ENCODE measurements at regions of chr1 and their contacts with region 1.

Region 1: GRCh38 chr1:210311726-210312493 is 16.8 kb upstream of the HHAT start:
- DNase-seq: no peak
- ATAC-seq: no peak
- H3K4me3 ChIP-seq: no peak overlapping the region
- H3K27ac ChIP-seq: no peak overlapping the region
- H3K4me1 ChIP-seq: 0 out of 2 replicates have a peak, but pooled peaks cover 2% of the 10 kb centered on the region
- H3K27me3 ChIP-seq: peaks cover 36% of the 10 kb centered on the region
- CTCF ChIP-seq: no peak
- POLR2A ChIP-seq: no peak
- RAD21 ChIP-seq: no peak

Region 2: DNA sequence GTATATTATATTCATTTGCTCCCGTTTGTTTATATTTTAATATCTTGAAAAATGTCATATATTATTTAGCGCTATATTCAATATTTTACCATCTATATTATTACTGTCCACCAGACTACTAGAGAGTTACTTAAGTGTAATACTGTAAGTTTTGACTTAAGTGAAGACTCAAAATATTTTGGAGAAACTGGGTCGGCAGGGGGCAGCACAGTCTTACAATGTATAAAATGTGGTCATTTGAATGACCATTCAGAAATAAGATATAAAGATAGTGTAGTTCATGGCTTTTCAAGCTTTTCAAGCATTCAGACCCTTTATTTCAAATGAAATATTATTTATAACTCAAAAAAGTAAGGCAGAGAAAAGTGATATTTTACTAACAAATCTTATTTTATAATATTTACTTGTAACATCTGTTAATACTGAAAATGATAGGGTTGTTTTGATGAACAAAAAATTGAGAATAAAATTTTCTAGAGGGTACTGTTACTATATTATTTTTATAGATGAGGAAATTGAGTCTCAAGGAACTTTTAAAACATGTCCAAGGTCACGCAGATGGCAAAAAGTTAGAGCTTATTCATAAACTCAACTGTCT is 168.3 kb before region 1 on chr1:
- CTCF ChIA-PET with region 1: interaction called, 7 read pairs
- POLR2A ChIA-PET with region 1: no interaction called
- dilution Hi-C with region 1: no loop called
- in situ Hi-C with region 1: loop called (anchors 5 kb)
- intact Hi-C with region 1: loop called (anchors 1 kb)
- DNase-seq: peak; percentile 68
- ATAC-seq: no peak
- H3K4me3 ChIP-seq: no peak overlapping the region
- H3K27ac ChIP-seq: no peak overlapping the region
- H3K4me1 ChIP-seq: no peaks in the 10 kb centered on the region
- H3K27me3 ChIP-seq: no peaks in the 10 kb centered on the region
- CTCF ChIP-seq: peak; percentile 74
- POLR2A ChIP-seq: no peak
- RAD21 ChIP-seq: peak; percentile 81

Region 3: GRCh38 chr1:210358626-210359025 is 46.7 kb after region 1 on chr1:
- CTCF ChIA-PET with region 1: no interaction called
- POLR2A ChIA-PET with region 1: no interaction called
- dilution Hi-C with region 1: no loop called
- in situ Hi-C with region 1: no loop called
- intact Hi-C with region 1: no loop called
- DNase-seq: no peak
- ATAC-seq: no peak
- H3K4me3 ChIP-seq: no peak overlapping the region
- H3K27ac ChIP-seq: no peak overlapping the region
- H3K4me1 ChIP-seq: peaks cover 3% of the 10 kb centered on the region; the same call in 1 of the 2 replicates
- H3K27me3 ChIP-seq: no peaks in the 10 kb centered on the region; the same call in 1 of the 2 replicates
- CTCF ChIP-seq: no peak
- POLR2A ChIP-seq: no peak
- RAD21 ChIP-seq: no peak